Heart left ventricle (tissue), 16 donors: ENCODE measurements at regions of chr5 and their contacts with region 1.

Region 1: DNA sequence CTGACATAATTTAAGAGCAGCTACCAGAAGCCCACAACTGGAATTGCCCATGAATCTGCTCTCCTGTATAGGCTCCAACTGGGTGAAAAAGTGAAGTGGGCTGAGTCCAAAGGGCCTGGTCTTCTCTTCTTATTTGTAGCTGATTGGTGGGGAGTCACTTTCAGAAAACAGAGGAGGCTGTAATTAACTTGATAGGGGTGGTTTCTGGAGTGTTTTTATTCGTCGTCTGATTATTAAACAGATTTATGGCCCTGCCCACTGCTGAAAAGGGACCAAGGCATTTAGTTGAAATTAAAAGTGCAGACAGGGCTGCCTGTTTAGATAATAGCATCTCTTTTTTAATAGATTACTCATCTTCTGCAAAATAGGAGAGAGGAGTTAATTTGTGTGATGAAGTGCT is 81.0 kb upstream of the SAP30L start:
- DNase-seq: no peak
- ATAC-seq: no peak
- H3K4me3 ChIP-seq: no peak overlapping the region
- H3K27ac ChIP-seq: peak overlapping the region in 1 of 12 donors; percentile 74
- H3K4me1 ChIP-seq: peaks cover 0 to 57% (median 35%) of the 10 kb centered on the region in 12 donors
- H3K27me3 ChIP-seq: no peaks in the 10 kb centered on the region
- CTCF ChIP-seq: no peak
- POLR2A ChIP-seq: no peak

Region 2: DNA sequence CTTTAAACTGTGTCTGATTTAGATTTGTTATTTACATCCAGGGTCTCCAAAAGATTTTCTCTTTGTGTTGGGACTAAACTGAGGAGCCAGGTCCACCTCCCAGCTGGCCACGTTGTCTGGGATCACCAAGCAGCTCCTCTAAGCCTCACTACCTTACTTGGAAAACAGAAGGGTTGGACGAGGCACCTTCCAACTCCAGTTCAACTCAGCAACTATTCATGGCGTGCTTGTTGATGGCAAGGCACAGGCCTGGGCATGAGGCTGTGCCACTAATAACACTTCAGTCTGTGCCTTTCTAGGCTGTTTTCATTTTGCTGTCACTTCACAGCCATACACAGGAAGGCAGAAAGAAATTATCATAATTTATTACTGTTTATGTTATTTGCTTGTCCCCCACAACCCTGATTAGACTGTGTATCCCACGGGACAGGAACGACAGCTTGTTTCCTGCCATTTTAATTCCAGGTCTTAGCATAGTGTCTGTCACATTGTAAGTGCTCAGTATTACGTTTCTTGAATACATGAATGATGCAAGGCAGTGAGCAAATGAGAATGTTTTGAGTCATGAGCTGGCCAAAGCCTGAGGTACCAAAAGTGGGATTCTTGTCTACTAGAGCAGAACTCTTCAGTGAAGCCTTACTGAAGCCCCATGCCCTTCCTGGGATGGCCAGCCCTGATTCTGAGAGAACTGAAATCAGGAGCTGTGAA is 48.4 kb before region 1 on chr5:
- intact Hi-C with region 1: loop called in 1 of 10 experiments (anchors 5 kb)
- DNase-seq: no peak
- ATAC-seq: no peak
- H3K4me3 ChIP-seq: no peak overlapping the region
- H3K27ac ChIP-seq: no peak overlapping the region
- H3K4me1 ChIP-seq: peaks cover 0 to 17% (median 4%) of the 10 kb centered on the region in 12 donors
- H3K27me3 ChIP-seq: no peaks in the 10 kb centered on the region
- CTCF ChIP-seq: no peak
- POLR2A ChIP-seq: no peak

Region 3: DNA sequence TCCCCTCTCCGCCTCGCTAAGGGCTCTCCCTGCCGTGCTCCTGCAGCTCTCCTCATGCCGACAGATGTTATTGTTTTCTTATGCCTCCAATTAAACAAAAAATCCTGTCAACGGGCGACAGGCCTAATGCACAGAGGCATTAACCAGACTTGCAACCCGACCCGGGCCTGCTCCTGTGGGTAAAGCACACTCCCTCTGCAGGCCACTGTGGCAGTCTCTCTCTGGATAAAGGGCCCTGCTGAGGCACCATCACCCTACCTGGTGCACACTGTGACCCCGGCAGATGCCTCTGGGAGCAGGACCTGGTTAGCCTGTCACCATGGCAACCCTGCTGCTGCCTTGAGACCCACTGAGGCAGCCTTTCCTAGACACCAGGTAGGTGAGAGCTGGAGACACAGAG is 140.8 kb after region 1 on chr5:
- intact Hi-C with region 1: no loop called
- DNase-seq: no peak
- ATAC-seq: no peak
- H3K4me3 ChIP-seq: no peak overlapping the region
- H3K27ac ChIP-seq: no peak overlapping the region
- H3K4me1 ChIP-seq: no peaks in the 10 kb centered on the region
- H3K27me3 ChIP-seq: peaks cover 0 to 27% (median 3%) of the 10 kb centered on the region in 9 donors
- CTCF ChIP-seq: no peak
- POLR2A ChIP-seq: no peak